HCT116 (cell line): ENCODE measurements at regions of chr16 and their contacts with region 1.

Region 1: DNA sequence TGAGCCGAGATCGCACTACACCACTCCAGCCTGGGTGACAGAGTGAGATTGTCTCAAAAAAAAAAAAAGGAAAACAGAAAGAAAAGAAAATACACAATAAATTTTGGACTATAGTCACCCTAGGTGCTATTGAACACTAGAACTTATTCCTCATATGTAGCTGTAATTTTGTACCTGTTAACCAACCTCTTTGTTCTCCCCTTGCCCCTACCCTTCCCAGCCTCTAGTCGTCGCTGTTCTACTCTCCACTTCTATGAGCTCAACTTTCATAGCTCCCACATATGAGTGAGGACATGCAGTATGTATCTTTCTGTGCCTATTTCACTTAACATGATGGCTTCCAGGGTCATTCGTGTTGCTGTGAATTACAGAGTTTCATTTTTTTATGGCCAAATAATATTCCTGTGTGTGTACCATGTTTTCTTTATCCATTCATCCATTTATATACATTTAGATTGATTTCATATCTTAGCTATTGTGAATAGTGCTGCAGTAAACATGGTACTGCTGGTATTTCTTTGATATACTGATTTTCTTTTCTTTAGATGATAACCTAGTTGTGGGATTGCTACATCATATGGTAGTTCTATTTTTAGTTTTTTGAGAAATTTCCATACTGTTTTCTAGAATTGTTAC is 28.3 kb downstream of the VPS35L start:
- DNase-seq: peak; percentile 35
- ATAC-seq: peak; percentile 94
- H3K4me3 ChIP-seq: no peak overlapping the region
- H3K27ac ChIP-seq: no peak overlapping the region
- H3K4me1 ChIP-seq: no peaks in the 10 kb centered on the region
- H3K27me3 ChIP-seq: no peaks in the 10 kb centered on the region
- CTCF ChIP-seq: peak; percentile 32 to 98 (median 97); a peak in 5 of 6 replicates
- POLR2A ChIP-seq: no peak
- RAD21 ChIP-seq: peak; percentile 53

Region 2: GRCh38 chr16:19555162-19555937 is 28.4 kb before region 1 on chr16 and contains the start of gene VPS35L:
- CTCF ChIA-PET with region 1: interaction called, 28 read pairs
- POLR2A ChIA-PET with region 1: no interaction called
- RAD21 ChIA-PET with region 1: no interaction called
- intact Hi-C with region 1: no loop called
- DNase-seq: peak; percentile 91
- ATAC-seq: peak; percentile 89
- H3K4me3 ChIP-seq: peak within 1 kb of the TSS; percentile 65 to 67
- H3K27ac ChIP-seq: peak within 1 kb of the TSS; percentile 78
- H3K4me1 ChIP-seq: peaks cover 0 to 8% of the 10 kb centered on the region in 2 experiments; a peak in 2 of 4 replicates
- H3K27me3 ChIP-seq: no peaks in the 10 kb centered on the region
- CTCF ChIP-seq: peak; percentile 38 to 50 (median 43); a peak in 4 of 6 replicates
- POLR2A ChIP-seq: no peak
- RAD21 ChIP-seq: no peak
- total RNA-seq, gene VPS35L: 21.4 TPM

Region 3: DNA sequence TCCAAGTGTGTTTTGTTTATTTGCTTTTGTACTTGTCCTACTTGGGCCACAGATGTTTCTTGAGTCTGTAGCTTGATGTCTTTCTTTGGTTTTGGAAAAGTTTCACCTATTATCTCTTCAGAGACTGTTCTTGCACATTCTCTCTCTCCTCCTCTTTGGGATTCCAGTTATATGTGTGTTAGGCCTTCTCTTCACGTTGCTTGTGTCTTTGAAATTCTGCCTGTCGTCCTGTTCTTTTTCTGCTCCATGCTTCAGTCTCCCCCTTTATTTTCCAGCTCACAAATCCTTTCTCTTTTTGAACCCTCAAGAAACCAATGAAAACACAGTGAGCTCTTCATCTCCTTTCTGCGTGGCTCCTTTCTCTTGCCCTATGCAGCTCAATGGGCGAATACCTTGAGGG is 20.4 kb before region 1 on chr16:
- CTCF ChIA-PET with region 1: interaction called, 28 read pairs
- POLR2A ChIA-PET with region 1: no interaction called
- RAD21 ChIA-PET with region 1: no interaction called
- intact Hi-C with region 1: no loop called
- DNase-seq: no peak
- ATAC-seq: no peak
- H3K4me3 ChIP-seq: no peak overlapping the region
- H3K27ac ChIP-seq: no peak overlapping the region
- H3K4me1 ChIP-seq: no peaks in the 10 kb centered on the region
- H3K27me3 ChIP-seq: no peaks in the 10 kb centered on the region
- CTCF ChIP-seq: no peak
- POLR2A ChIP-seq: no peak
- RAD21 ChIP-seq: no peak

Region 4: GRCh38 chr16:19595043-19595767 is 11.4 kb after region 1 on chr16:
- CTCF ChIA-PET with region 1: interaction called, 28 read pairs
- POLR2A ChIA-PET with region 1: interaction called, 3 read pairs
- RAD21 ChIA-PET with region 1: no interaction called
- intact Hi-C with region 1: no loop called
- DNase-seq: no peak
- ATAC-seq: peak; percentile 72
- H3K4me3 ChIP-seq: no peak overlapping the region
- H3K27ac ChIP-seq: no peak overlapping the region
- H3K4me1 ChIP-seq: peaks cover 2 to 10% of the 10 kb centered on the region in 2 experiments; a peak in 1 of 4 replicates
- H3K27me3 ChIP-seq: no peaks in the 10 kb centered on the region
- CTCF ChIP-seq: no peak
- POLR2A ChIP-seq: no peak
- RAD21 ChIP-seq: no peak

Region 5: DNA sequence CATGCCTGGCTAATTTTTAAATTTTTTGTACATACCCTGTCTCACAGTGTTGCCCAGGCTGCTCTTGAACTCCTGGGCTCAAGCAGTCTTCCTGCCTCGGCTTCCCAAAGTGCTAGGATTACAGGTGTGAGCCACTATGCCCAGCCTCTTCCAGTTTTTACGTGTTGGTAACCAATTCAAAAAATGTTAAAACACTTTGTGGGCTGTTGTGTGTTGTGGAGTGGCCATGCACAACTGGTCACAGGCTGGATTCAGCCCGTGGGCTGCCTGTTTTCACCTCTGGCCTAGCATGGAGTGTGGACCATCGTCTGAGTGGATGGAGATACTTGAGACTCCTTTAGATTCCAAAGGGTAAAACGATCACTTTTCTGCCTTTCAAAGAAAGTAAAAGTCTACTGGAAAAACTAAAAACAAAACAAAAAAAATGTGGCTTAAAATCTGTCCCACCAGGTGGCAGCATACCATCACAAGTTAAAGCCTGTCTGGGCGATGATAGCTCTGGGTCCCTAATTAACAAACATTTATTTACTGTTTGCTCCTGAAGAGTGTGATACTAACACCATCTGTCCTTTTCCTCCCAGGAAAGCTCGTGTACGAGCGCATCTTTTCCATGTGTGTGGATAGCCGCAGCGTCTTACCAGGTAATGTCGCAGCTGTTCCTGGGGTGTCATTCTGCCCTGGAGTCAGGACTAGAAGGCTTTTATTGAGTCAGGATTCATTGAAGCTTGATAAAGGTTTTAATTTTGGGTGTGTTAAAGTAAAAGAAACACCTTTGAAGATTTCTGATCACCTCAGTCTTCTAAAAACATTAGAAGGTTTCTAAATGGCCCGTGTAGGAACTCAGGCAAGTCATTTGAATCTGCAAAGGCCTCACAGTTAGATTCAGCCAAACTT is 17.5 kb after region 1 on chr16:
- CTCF ChIA-PET with region 1: interaction called, 28 read pairs
- POLR2A ChIA-PET with region 1: interaction called, 3 read pairs
- RAD21 ChIA-PET with region 1: interaction called in 1 of 2 experiments, 3 read pairs
- intact Hi-C with region 1: no loop called
- DNase-seq: peak; percentile 36
- ATAC-seq: peak; percentile 67
- H3K4me3 ChIP-seq: no peak overlapping the region
- H3K27ac ChIP-seq: no peak overlapping the region
- H3K4me1 ChIP-seq: no peaks in the 10 kb centered on the region; a peak in 1 of 4 replicates
- H3K27me3 ChIP-seq: no peaks in the 10 kb centered on the region
- CTCF ChIP-seq: peak; percentile 56 to 86 (median 78); a peak in 5 of 6 replicates
- POLR2A ChIP-seq: no peak
- RAD21 ChIP-seq: peak; percentile 91

Region 6: GRCh38 chr16:19886073-19886941 is 302.5 kb after region 1 on chr16:
- CTCF ChIA-PET with region 1: interaction called, 12 read pairs
- POLR2A ChIA-PET with region 1: interaction called, 3 read pairs
- RAD21 ChIA-PET with region 1: no interaction called
- intact Hi-C with region 1: no loop called
- DNase-seq: peak; percentile 72
- ATAC-seq: peak; percentile 76
- H3K4me3 ChIP-seq: no peak overlapping the region
- H3K27ac ChIP-seq: no peak overlapping the region
- H3K4me1 ChIP-seq: peaks cover 3 to 15% of the 10 kb centered on the region in 2 experiments; a peak in 3 of 4 replicates
- H3K27me3 ChIP-seq: no peaks in the 10 kb centered on the region
- CTCF ChIP-seq: peak; percentile 93 to 100 (median 99)
- POLR2A ChIP-seq: no peak
- RAD21 ChIP-seq: peak; percentile 99